Activated naive CD4-positive, alpha-beta T cell treated with anti-CD3 and anti-CD28 coated beads, Interleukin-2, amount 10 ng/mL, durations not matched to agents 7 days and 5 days (primary cell): ENCODE measurements at regions of chr2 and their contacts with region 1.

Region 1: GRCh38 chr2:10072656-10073480 is 7.3 kb downstream of the CYS1 start:
- DNase-seq: peak; percentile 88
- H3K4me3 Mint-ChIP-seq: no peak overlapping the region
- H3K27ac Mint-ChIP-seq: no peak overlapping the region
- H3K4me1 Mint-ChIP-seq: peaks cover 6% of the 10 kb centered on the region
- H3K27me3 Mint-ChIP-seq: peaks cover 72% of the 10 kb centered on the region

Region 2: DNA sequence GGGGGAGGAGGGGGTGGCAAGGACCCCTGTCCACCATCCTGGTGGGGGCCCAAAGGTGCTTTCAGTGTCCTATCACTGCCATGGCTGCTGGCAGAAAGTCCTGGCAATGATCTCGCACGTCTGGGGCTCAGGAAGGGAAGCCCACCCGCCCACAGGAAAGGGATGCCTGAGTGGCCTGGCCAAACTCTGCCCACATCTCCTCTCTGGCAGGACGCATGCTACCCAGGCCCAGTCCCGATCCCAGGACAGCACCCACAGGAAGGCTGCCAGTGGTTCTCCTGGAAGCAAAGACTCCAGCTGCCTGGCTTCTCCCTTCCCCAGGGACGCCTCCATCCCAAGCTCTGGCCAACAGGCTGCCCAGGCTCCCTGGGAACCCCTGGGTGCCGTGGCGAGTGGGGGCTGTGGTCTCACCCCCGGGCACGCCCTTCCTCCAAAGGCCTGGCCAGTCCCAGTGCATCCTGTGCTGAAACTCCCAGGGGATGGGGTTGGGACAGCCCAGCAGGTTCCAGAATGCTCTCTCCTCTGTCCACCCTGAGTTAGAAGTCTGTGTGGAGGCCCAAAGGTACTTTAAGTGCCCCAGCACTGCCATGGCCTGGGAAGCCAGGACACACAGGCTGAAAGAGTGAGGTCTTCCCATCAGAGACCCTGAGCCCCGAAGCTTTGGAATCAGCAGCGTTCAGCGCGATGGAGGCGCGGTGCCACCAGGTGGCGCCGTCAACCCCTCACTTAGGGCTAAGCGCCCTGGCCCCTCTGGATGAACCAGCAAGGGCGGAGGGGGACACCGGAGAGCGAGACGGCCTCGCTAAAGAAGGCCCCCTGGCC is 259.3 kb before region 1 on chr2:
- CTCF ChIA-PET with region 1: interaction called, 12 read pairs
- DNase-seq: peak; percentile 78
- H3K4me3 Mint-ChIP-seq: no peak overlapping the region
- H3K27ac Mint-ChIP-seq: no peak overlapping the region
- H3K4me1 Mint-ChIP-seq: peaks cover 29% of the 10 kb centered on the region
- H3K27me3 Mint-ChIP-seq: peaks cover 65% of the 10 kb centered on the region

Region 3: GRCh38 chr2:10057231-10058107 is 15.4 kb before region 1 on chr2:
- CTCF ChIA-PET with region 1: interaction called, 12 read pairs
- DNase-seq: no peak
- H3K4me3 Mint-ChIP-seq: no peak overlapping the region
- H3K27ac Mint-ChIP-seq: no peak overlapping the region
- H3K4me1 Mint-ChIP-seq: peaks cover 6% of the 10 kb centered on the region
- H3K27me3 Mint-ChIP-seq: peaks cover 60% of the 10 kb centered on the region

Region 4: GRCh38 chr2:10091182-10091888 is 18.5 kb after region 1 on chr2:
- CTCF ChIA-PET with region 1: interaction called, 83 read pairs
- DNase-seq: peak; percentile 47
- H3K4me3 Mint-ChIP-seq: peak overlapping the region; percentile 40
- H3K27ac Mint-ChIP-seq: no peak overlapping the region
- H3K4me1 Mint-ChIP-seq: peaks cover 13% of the 10 kb centered on the region
- H3K27me3 Mint-ChIP-seq: peaks cover 99% of the 10 kb centered on the region

Region 5: DNA sequence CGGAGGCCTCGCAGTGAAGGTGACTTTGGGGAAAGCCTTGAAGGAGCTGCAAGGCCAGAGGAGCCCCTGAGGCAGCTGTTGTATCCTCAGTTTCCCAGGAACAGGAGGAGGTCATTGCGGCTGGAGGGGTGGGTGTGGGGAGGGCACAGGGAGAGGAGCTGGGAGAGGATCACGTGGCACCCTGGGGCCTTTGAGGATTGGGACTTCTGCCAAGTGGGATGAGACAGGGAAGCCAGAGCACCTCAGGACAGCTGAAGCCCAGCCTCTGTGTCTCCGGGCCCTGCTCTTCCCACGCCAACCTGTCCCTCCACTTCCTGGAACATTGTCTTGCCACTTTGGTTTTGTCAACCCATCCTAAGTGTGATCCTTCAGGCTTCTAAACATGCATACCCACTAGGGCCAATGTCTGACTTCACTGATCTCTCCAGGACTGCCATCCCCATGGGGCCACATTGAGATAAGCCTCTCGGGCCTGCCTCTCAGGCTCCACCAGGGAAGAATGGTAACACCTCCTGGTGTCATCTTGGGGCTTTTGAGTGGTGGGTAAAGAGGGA is 30.4 kb after region 1 on chr2:
- CTCF ChIA-PET with region 1: interaction called, 83 read pairs
- DNase-seq: no peak
- H3K4me3 Mint-ChIP-seq: no peak overlapping the region
- H3K27ac Mint-ChIP-seq: no peak overlapping the region
- H3K4me1 Mint-ChIP-seq: no peaks in the 10 kb centered on the region
- H3K27me3 Mint-ChIP-seq: peaks cover 52% of the 10 kb centered on the region

Region 6: GRCh38 chr2:10129490-10129889 is 56.6 kb after region 1 on chr2:
- CTCF ChIA-PET with region 1: interaction called, 27 read pairs
- DNase-seq: no peak
- H3K4me3 Mint-ChIP-seq: no peak overlapping the region
- H3K27ac Mint-ChIP-seq: peak overlapping the region; percentile 82
- H3K4me1 Mint-ChIP-seq: peaks cover 78% of the 10 kb centered on the region
- H3K27me3 Mint-ChIP-seq: no peaks in the 10 kb centered on the region

Region 7: DNA sequence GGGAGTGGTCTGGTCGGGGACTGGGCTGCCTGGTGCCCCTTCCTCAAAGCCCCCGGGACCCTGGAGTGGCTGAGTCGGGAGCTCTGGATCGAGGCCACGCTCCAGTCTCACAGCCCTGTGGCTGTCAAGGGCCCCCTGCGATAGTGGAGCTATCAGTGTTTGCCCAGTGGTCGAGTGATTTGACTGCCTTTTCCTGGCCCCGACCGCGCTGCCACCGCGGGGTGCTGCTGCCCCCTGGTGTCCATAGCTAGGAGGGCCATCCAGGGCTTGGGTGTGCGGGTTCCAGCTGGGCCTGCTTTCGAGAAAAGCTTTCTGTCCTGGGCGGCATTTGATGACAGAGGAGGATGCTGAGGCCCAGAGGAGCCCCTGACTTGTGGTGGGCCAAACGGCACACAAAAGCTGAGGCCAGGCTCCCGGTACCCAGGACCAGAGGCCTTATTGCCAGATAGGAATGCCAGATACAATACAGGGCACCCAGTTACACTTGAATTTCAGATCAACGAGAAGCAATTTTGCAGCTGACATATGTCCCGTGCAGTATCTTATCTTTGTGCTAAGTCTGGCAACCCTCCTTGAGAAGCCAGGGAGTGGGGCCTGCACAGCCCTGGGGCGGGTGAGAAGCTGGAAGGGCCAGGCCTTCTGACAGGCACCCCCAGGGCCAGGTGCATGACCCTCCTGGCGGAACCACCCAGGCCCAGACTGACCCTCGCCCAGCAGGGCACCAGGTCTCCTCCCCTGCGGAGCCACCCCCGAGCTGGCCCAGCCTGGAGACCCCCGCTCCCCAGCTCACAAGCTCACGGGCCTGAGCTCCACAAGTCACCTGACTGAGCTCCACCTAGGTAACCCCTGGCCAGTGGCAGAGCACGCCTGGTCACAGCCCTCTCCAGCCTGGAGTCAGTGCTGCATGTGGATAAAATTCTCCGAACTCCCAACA is 362.3 kb after region 1 on chr2:
- CTCF ChIA-PET with region 1: interaction called, 79 read pairs
- DNase-seq: peak; percentile 73
- H3K4me3 Mint-ChIP-seq: no peak overlapping the region
- H3K27ac Mint-ChIP-seq: no peak overlapping the region
- H3K4me1 Mint-ChIP-seq: peaks cover 13% of the 10 kb centered on the region
- H3K27me3 Mint-ChIP-seq: peaks cover 46% of the 10 kb centered on the region